Head of caudate nucleus (tissue), 42 donors: ENCODE measurements at regions of chr14 and their contacts with region 1.

Region 1: DNA sequence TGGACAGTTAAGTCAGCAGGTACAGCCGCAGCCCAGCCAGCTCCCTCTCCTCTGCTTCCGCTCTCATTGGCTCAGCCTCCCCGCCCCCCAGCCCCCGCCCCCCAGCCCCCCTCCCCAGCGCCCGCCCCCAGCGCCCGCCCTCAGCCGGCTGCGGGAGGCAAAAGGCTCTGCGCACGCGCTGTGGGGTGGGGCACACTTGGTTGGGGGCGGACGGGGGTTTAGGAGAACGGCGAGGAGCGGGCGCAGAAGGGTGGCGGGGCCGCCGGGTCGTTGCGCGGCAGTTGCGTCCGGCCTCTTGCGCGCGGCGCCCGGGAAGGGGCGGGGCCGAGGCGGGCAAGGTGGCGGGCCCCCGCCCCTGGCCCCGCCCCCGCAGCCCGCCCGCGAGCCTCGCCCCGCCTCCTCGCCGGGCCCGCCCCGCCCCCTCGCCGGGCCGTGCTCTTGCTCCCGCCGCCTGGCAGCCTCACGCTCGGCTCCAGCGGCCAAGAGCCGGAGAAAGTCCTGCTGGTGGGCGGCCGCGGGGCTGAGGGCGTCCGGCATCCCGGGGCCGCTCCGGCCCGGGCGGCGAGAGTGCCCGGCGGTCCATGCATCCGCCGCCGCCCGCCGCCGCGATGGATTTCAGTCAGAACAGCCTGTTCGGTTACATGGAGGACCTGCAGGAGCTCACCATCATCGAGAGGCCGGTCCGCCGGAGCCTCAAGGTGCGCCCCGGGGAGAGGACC is at the start of gene PPP4R4:
- DNase-seq: peak; percentile 54 to 94 (median 87)

Region 2: GRCh38 chr14:94080471-94081289 is 93.4 kb before region 1 on chr14 and contains the start of gene DDX24:
- intact Hi-C with region 1: loop called (anchors 5 kb)
- DNase-seq: peak; percentile 94 to 99 (median 98)

Region 3: GRCh38 chr14:94136575-94137331 is 37.3 kb before region 1 on chr14:
- intact Hi-C with region 1: loop called (anchors 5 kb)
- DNase-seq: peak; percentile 56 to 97 (median 92)

Region 4: GRCh38 chr14:94213021-94213420 is 39.0 kb after region 1 on chr14:
- intact Hi-C with region 1: no loop called
- DNase-seq: no peak

Region 5: DNA sequence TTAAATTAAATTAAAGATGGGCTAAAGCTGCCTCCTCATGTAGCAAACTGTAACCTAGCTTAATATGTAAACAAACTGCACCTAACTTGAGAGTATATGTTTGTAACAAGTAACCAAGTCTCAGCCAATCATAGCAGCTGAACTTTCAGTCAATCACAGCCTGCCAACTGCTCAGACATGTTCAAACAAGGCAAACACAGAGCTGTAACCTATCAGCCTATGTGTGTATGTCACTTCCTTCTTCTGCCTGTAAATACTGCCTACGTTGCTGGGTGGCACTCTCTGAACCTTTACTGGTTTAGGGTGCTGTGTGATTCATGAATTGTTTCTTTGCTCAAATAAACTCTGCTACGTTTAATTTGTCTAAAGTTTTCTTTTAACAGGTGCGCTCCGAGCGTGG is 146.2 kb after region 1 on chr14:
- intact Hi-C with region 1: no loop called
- DNase-seq: peak in 1 of 42 donors; percentile 42